Activated CD4-positive, alpha-beta T cell treated with anti-CD3 and anti-CD28 coated beads for 36 hours (primary cell): ENCODE measurements at regions of chr5 and their contacts with region 1.

Region 1: GRCh38 chr5:73215891-73216610 is 43.1 kb downstream of the TMEM174 start:
- DNase-seq: peak; percentile 84
- ATAC-seq: peak; percentile 82
- H3K4me3 Mint-ChIP-seq: no peak overlapping the region
- H3K27ac Mint-ChIP-seq: no peak overlapping the region
- H3K4me1 Mint-ChIP-seq: peaks cover 14% of the 10 kb centered on the region
- H3K27me3 Mint-ChIP-seq: peaks cover 76% of the 10 kb centered on the region

Region 2: GRCh38 chr5:73122875-73123810 is 92.9 kb before region 1 on chr5:
- CTCF ChIA-PET with region 1: no interaction called
- POLR2A ChIA-PET with region 1: no interaction called
- intact Hi-C with region 1: no loop called
- DNase-seq: peak; percentile 17
- ATAC-seq: peak; percentile 66
- H3K4me3 Mint-ChIP-seq: no peak overlapping the region
- H3K27ac Mint-ChIP-seq: no peak overlapping the region
- H3K4me1 Mint-ChIP-seq: peaks cover 21% of the 10 kb centered on the region
- H3K27me3 Mint-ChIP-seq: peaks cover 70% of the 10 kb centered on the region

Region 3: GRCh38 chr5:73454351-73455036 is 238.4 kb after region 1 on chr5:
- CTCF ChIA-PET with region 1: interaction called, 8 read pairs
- POLR2A ChIA-PET with region 1: no interaction called
- intact Hi-C with region 1: loop called (anchors 1 to 5 kb)
- DNase-seq: peak; percentile 53
- ATAC-seq: peak; percentile 78
- H3K4me3 Mint-ChIP-seq: no peak overlapping the region
- H3K27ac Mint-ChIP-seq: no peak overlapping the region
- H3K4me1 Mint-ChIP-seq: no peaks in the 10 kb centered on the region
- H3K27me3 Mint-ChIP-seq: peaks cover 61% of the 10 kb centered on the region

Region 4: GRCh38 chr5:73498057-73499008 is 282.3 kb after region 1 on chr5 and contains the start of gene BTF3:
- CTCF ChIA-PET with region 1: no interaction called
- POLR2A ChIA-PET with region 1: no interaction called
- intact Hi-C with region 1: no loop called
- DNase-seq: peak; percentile 96
- ATAC-seq: peak; percentile 95
- H3K4me3 Mint-ChIP-seq: peak within 1 kb of the TSS; percentile 87
- H3K27ac Mint-ChIP-seq: peak within 1 kb of the TSS; percentile 98
- H3K4me1 Mint-ChIP-seq: peaks cover 35% of the 10 kb centered on the region
- H3K27me3 Mint-ChIP-seq: peaks cover 2% of the 10 kb centered on the region
- total RNA-seq, gene BTF3: 1,030 to 1,213 TPM